GM10248 (cell line): ENCODE measurements at regions of chr19 and their contacts with region 1.

Region 1: GRCh38 chr19:45327404-45328143 is 4.9 kb upstream of the CKM start:
- DNase-seq: no peak
- CTCF ChIP-seq: no peak

Region 2: DNA sequence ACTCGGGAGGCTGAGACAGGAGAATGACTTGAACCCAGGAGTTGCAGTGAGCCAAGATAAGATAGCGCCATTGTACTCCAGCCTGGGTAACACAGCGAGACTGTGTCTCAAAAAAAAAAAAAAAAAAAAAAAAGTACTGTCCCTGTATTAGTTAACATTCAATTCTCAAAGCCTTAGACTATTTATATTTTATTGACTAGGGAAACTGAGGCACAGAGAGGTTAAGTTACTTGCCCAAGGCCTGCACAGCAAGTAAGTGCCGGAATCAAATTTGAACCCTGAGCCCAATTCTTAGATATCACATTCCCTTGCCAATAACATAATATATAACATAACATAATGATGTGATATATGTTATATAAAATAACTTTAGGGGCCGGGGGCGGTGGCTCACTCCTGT is 12.1 kb after region 1 on chr19:
- CTCF ChIA-PET with region 1: interaction called, 10 read pairs
- POLR2A ChIA-PET with region 1: no interaction called
- DNase-seq: no peak
- CTCF ChIP-seq: no peak

Region 3: GRCh38 chr19:45902651-45903625 is 575.4 kb after region 1 on chr19:
- CTCF ChIA-PET with region 1: no interaction called
- POLR2A ChIA-PET with region 1: no interaction called
- DNase-seq: peak; percentile 100
- CTCF ChIP-seq: no peak